Caco-2 (cell line): ENCODE measurements at regions of chr12 and their contacts with region 1.

Region 1: GRCh38 chr12:109462710-109463692 is 14.1 kb downstream of the KCTD10 start:
- DNase-seq: peak in 1 of 2 experiments; percentile 39
- H3K4me3 ChIP-seq: no peak overlapping the region
- H3K4me3 Mint-ChIP-seq: peak overlapping the region; percentile 65
- H3K27ac Mint-ChIP-seq: peak overlapping the region; percentile 95
- H3K4me1 ChIP-seq: peaks cover 43% of the 10 kb centered on the region
- H3K4me1 Mint-ChIP-seq: peaks cover 47% of the 10 kb centered on the region
- H3K27me3 ChIP-seq: no peaks in the 10 kb centered on the region
- H3K27me3 Mint-ChIP-seq: no peaks in the 10 kb centered on the region
- CTCF ChIP-seq: no peak

Region 2: GRCh38 chr12:109428037-109428629 is 34.9 kb before region 1 on chr12:
- CTCF ChIA-PET with region 1: interaction called, 18 read pairs
- POLR2A ChIA-PET with region 1: no interaction called
- intact Hi-C with region 1: loop called (anchors 1 kb)
- DNase-seq: peak; percentile 68 to 78
- H3K4me3 ChIP-seq: no peak overlapping the region
- H3K4me3 Mint-ChIP-seq: no peak overlapping the region
- H3K27ac Mint-ChIP-seq: no peak overlapping the region
- H3K4me1 ChIP-seq: no peaks in the 10 kb centered on the region
- H3K4me1 Mint-ChIP-seq: no peaks in the 10 kb centered on the region
- H3K27me3 ChIP-seq: no peaks in the 10 kb centered on the region
- H3K27me3 Mint-ChIP-seq: no peaks in the 10 kb centered on the region
- CTCF ChIP-seq: peak; percentile 92 to 93